ENCODE measurements at regions of chr2 and their contacts with region 1.

Region 1: DNA sequence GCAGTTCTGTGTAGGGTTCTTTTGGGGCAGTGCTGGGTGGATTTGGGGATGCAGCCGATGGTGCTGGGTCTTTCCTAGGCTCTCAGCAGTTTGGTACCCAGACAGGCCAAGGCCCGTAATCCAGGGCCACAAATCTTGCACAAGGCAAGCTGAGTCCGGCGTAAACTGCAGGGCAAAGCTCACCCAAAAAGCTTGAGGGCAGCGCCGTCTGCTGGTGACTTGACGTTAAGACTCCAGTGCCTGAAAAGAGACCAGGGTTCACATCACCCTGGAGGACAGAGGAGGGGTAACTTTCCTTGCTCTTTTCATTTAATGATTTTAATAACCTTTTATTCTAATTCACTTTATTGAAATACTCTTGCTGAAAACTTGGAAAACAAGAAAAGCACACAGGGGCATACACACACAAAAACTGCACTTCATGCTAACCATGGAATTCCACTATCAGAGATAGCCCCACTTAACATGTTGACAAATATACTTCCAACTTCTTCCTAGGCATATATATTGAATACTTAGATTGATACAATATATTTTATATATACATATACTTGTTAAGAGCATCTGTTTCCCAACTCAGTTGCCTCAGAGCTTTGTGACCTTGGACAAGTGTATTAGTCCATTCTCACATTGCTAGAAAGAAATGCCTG is 38.9 kb downstream of the CNGA3 start:
- DNase-seq: peak; percentile 87
- CTCF ChIP-seq: peak; percentile 95

Region 2: DNA sequence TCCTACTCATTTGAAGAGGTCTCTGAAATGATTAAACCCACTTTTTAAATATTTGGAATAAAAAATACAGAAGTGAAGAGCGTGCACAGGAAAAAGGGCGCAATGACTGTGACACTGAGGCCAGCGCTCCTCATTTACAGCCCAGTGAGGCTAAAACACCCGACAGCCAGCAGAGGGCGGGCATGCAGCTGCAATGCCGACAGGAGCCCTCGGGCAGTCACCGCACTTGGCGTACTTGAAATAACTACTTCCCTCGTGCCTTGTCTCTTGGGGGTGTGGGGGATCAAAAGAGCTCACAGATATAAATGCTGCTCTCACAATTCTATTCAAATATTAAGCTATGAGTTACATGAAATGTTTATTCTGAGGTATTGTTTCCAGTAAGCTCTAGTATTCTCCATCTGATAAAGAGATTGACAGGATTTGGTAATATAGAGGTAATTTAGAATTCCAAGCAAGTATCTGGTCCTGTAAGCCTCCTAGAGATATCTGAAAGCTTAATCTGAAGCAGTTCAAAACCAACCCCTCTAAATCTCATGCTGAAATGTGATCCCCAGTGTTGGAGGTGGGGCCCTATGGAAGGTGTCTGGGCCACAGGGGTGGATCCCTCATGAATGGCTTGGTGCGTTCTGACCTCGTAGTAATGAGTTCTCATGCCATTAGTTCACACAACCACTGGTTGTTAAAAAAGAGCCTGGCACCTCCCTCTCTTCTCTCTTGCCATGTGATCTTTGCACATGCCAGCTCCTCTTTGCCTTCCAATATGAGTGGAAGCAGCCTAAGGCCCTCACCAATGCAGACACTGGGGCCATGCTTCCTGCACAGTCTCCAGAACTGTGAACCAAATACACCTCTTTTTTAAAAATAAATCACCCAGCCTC is 578.2 kb before region 1 on chr2:
- in situ Hi-C with region 1: loop called (anchors 25 kb)
- DNase-seq: peak; percentile 72
- CTCF ChIP-seq: peak; percentile 85

Region 3: GRCh38 chr2:98999159-98999558 is 614.0 kb after region 1 on chr2:
- in situ Hi-C with region 1: no loop called
- DNase-seq: no peak
- CTCF ChIP-seq: no peak

Region 4: GRCh38 chr2:99337113-99338028 is 952.2 kb after region 1 on chr2 and contains the start of gene EIF5B:
- in situ Hi-C with region 1: no loop called
- DNase-seq: peak; percentile 92
- CTCF ChIP-seq: peak; percentile 86